HepG2 (cell line): ENCODE measurements at regions of chr11 and their contacts with region 1.

Region 1: GRCh38 chr11:78727816-78728215 is 153.2 kb upstream of the NARS2 start:
- DNase-seq: no peak
- ATAC-seq: no peak
- H3K4me3 ChIP-seq: no peak overlapping the region
- H3K27ac ChIP-seq: no peak overlapping the region
- H3K4me1 ChIP-seq: no peaks in the 10 kb centered on the region
- H3K27me3 ChIP-seq: peaks cover 3 to 12% of the 10 kb centered on the region in 2 experiments
- CTCF ChIP-seq: no peak
- EP300 ChIP-seq: no peak
- POLR2A ChIP-seq: no peak
- RAD21 ChIP-seq: no peak

Region 2: DNA sequence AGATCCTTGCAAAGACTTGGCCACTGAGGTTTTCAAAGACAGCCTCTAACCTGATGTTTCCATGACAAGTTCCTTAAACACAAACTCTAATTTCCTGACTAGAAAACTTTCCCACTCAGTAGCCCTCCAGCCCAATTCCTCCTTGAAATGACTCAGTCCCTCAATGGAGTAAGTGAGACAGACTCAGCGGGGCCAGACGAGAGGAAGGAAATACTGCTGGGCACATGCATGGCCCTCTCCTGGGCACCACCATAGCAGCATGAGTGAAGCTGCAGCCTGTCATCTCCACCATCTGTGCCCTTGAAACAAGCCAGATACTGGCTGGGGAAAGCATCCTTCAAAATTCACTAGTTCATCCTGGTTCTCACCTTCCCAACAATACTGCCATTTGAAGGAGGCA is 1350.1 kb before region 1 on chr11:
- CTCF ChIA-PET with region 1: no interaction called
- POLR2A ChIA-PET with region 1: no interaction called
- in situ Hi-C with region 1: no loop called
- intact Hi-C with region 1: loop called (anchors 5 kb)
- DNase-seq: no peak
- ATAC-seq: no peak
- H3K4me3 ChIP-seq: no peak overlapping the region
- H3K27ac ChIP-seq: no peak overlapping the region
- H3K4me1 ChIP-seq: no peaks in the 10 kb centered on the region
- H3K27me3 ChIP-seq: no peaks in the 10 kb centered on the region
- CTCF ChIP-seq: no peak
- EP300 ChIP-seq: no peak
- POLR2A ChIP-seq: no peak
- RAD21 ChIP-seq: no peak